ENCODE measurements at regions of chr20 and their contacts with region 1.

Region 1: DNA sequence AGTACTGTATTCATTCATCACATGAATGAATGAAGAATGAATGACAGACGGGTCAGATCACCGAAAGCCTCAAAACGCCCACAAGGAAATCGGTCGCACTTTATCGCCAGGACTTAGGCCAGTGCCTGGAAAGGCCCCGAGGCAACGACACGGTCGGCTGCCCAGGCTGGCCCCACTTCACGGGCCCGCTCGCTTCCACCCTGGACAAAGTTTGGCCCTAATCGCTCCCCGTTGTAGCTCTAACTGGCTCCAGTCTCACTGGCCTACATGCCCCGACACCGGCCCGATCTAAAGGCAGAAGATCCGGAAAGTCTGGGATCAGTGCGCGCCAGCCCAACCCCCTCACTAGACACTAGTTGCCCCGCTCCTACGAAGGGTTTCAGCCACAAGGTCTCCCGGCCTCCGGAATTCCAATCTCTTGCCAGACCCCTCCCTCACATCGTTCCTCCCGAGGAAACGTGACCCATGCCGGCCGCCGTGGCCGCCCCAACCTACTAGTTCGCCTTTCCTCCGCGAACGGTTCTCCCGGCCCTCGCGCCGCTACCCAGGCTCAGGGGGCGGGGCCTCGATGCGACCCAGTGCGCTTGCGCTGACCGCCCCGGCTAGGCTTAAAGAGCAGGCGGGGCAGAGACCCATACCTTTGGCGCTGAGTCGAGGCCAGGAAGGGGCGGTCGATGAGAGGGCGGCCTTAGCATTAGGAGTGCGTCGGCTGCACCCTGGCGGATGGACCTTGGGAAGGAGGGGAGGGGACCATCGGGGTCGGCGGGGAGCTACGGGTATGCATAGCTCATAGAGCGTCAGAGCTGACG is at the starts of genes GSS and MYH7B:
- DNase-seq: peak; percentile 90 to 98 (median 96)
- ATAC-seq: peak; percentile 92
- H3K4me3 ChIP-seq: peak within 1 kb of the TSS; percentile 87
- H3K4me3 Mint-ChIP-seq: peak within 1 kb of the TSS; percentile 94
- H3K27ac ChIP-seq: peak within 1 kb of the TSS; percentile 62 to 70
- H3K27ac Mint-ChIP-seq: peak within 1 kb of the TSS; percentile 91
- H3K4me1 ChIP-seq: peaks cover 19% of the 10 kb centered on the region
- H3K4me1 Mint-ChIP-seq: peaks cover 23% of the 10 kb centered on the region
- H3K27me3 ChIP-seq: no peaks in the 10 kb centered on the region
- H3K27me3 Mint-ChIP-seq: no peaks in the 10 kb centered on the region
- CTCF ChIP-seq: no peak
- total RNA-seq, gene GSS: 24.3 to 24.7 TPM
- total RNA-seq, gene MYH7B: 0.53 to 0.58 TPM

Region 2: DNA sequence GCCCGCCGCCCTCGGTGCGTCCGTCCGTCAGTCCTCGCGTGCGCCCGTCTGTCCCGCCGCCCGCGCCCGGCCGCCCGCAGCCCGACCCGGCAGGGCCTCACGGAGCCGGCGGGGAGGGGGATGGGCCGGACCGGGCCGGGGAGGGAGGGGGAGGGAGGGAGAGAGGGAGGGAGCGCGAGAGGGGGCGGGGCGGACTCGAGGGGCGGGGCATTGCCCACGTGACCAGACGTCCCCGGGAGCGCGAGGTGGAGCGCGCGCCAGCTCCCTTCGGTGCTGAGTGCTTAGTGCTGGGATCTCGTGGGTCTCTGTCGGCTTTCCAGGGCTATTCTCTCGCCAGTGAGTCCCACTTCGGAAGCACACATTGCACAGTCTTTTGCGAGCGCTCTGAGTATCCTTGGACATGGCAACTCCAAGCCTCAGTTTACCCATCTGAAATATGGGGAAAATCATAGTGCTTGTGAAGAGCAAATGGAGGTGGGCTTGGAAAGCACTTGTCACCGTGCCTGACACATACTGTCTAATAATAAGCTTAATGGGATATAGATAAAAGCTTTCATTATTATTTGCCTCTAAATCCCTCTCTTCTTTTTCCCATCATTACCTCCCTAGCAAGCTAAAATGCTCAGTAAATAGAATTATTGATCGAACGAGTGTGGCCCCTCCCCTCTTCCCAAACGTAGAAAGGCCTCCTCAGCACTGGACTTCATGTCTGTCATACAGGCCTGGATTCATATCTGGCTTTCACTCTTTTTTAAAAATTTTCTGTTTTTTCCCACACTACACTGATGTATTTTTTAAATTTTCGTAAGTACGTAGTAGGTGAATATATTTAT is 129.7 kb before region 1 on chr20 and contains the start of gene NCOA6:
- CTCF ChIA-PET with region 1: interaction called, 4 read pairs
- POLR2A ChIA-PET with region 1: no interaction called
- intact Hi-C with region 1: loop called (anchors 1 to 2 kb)
- DNase-seq: peak; percentile 77 to 95 (median 84)
- ATAC-seq: peak; percentile 75
- H3K4me3 ChIP-seq: peak within 1 kb of the TSS; percentile 70
- H3K4me3 Mint-ChIP-seq: peak within 1 kb of the TSS; percentile 99
- H3K27ac ChIP-seq: peak within 1 kb of the TSS; percentile 35 to 66
- H3K27ac Mint-ChIP-seq: peak within 1 kb of the TSS; percentile 92
- H3K4me1 ChIP-seq: peaks cover 35% of the 10 kb centered on the region
- H3K4me1 Mint-ChIP-seq: peaks cover 47% of the 10 kb centered on the region
- H3K27me3 ChIP-seq: no peaks in the 10 kb centered on the region
- H3K27me3 Mint-ChIP-seq: no peaks in the 10 kb centered on the region
- CTCF ChIP-seq: no peak
- total RNA-seq, gene NCOA6: 14.6 to 16.3 TPM

Measured in CD4-positive, alpha-beta T cell (primary cell).